ENCODE measurements at regions of chr11 and their contacts with region 1.

Region 1: GRCh38 chr11:103257360-103257759 is 148.1 kb downstream of the DYNC2H1 start:
- DNase-seq: peak; percentile 35
- ATAC-seq: peak; percentile 98
- H3K4me3 ChIP-seq: no peak overlapping the region
- H3K27ac ChIP-seq: no peak overlapping the region
- H3K4me1 ChIP-seq: no peaks in the 10 kb centered on the region
- H3K27me3 ChIP-seq: no peaks in the 10 kb centered on the region
- CTCF ChIP-seq: peak; percentile 46 to 70 (median 58); a peak in 5 of 6 replicates
- POLR2A ChIP-seq: no peak
- RAD21 ChIP-seq: peak; percentile 73

Region 2: GRCh38 chr11:103659206-103659618 is 401.9 kb after region 1 on chr11:
- CTCF ChIA-PET with region 1: no interaction called
- POLR2A ChIA-PET with region 1: no interaction called
- RAD21 ChIA-PET with region 1: no interaction called
- intact Hi-C with region 1: loop called (anchors 5 kb)
- DNase-seq: peak; percentile 15
- ATAC-seq: peak; percentile 92
- H3K4me3 ChIP-seq: no peak overlapping the region
- H3K27ac ChIP-seq: no peak overlapping the region
- H3K4me1 ChIP-seq: no peaks in the 10 kb centered on the region
- H3K27me3 ChIP-seq: no peaks in the 10 kb centered on the region
- CTCF ChIP-seq: peak; percentile 30 to 58 (median 56); a peak in 5 of 6 replicates
- POLR2A ChIP-seq: no peak
- RAD21 ChIP-seq: peak; percentile 54